PC-9 (cell line): ENCODE measurements at regions of chr20 and their contacts with region 1.

Region 1: DNA sequence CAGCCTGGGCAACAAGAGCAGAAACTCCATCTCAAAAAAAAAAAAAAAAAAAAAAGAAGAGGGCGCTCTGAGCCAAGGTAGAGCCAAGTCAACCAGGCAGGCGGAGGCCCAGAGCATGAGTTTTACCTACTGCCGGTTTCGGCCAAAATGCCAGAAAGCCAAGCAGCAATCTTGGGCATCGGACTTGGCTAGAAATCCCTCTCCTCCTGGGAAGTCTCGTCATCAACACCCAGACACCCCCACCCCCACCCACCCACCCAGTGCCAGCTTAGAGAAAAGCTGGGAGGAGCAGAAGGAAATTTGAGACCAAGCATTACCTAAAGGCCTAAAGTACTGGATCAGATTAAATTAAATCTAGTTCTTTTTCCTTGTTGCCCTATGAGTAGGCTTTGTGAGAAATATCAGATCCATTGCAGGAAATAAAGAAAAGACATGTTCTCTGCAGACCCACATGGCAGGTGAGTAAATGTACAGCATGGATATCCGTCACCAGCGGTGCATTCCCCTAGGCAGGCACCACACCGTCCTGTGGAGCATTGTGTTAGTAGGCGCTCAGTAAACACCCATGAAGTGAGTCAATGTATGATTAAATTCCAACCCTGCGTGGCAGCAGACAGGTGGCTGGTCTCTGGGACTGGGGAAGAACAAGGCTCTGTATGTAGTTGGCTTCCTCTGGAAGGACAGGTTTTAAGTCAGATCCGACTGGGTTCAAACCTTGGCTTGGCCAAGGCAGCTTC is 21.0 kb downstream of the RIPOR3 start:
- DNase-seq: peak; percentile 79 to 96
- H3K4me3 ChIP-seq: no peak overlapping the region
- H3K27ac ChIP-seq: peak overlapping the region; percentile 86
- H3K4me1 ChIP-seq: peaks cover 50% of the 10 kb centered on the region
- H3K27me3 ChIP-seq: no peaks in the 10 kb centered on the region
- CTCF ChIP-seq: no peak

Region 2: DNA sequence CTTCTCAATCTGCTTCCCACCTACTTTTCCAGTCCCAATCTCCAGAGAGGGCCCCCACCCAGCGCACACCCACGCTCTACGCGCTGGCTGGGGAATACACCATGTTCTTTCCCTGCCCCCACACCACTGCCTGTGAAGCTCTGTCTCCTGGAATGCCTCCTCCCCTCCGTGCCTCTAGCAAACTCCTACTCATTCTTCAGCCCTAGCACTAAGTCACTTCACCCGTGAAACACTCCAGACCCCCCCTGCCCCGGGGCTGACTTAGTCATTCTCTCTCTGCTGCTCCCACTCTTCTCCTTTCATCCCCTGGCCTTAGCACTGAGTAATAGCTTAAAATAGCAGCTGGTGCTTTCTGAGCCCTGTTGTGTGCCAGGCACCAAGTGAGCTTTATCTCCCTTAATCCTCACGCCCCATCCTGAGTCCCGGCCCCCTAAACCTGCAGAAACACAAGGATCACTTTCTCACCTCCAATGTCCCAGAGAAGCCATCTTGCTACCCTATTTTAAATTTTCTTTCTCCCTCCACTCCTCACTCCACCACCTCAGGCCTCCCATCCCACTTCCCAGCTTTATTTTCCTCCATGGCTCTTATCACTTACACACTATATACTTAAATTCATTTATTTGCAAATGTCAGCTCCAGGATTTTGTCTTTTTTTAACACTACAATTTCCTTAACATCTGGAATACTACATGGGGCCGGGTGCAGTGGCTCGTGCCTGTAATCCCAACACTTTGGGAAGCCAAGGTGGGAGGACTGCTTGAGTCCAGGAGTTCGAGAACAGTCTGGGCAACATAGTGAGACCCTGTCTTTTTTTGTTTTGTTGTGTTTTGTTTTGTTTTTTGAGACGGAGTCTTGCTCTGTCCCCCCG is 54.8 kb after region 1 on chr20:
- CTCF ChIA-PET with region 1: interaction called, 11 read pairs
- POLR2A ChIA-PET with region 1: interaction called, 10 read pairs
- intact Hi-C with region 1: no loop called
- DNase-seq: peak; percentile 88 to 98
- H3K4me3 ChIP-seq: peak overlapping the region; percentile 20; the same call in 1 of the 2 replicates
- H3K27ac ChIP-seq: peak overlapping the region; percentile 71
- H3K4me1 ChIP-seq: peaks cover 63% of the 10 kb centered on the region
- H3K27me3 ChIP-seq: no peaks in the 10 kb centered on the region
- CTCF ChIP-seq: no peak